Activated CD4-positive, alpha-beta T cell treated with anti-CD3 and anti-CD28 coated beads, Interleukin-2, amount 10 ng/mL, durations not matched to agents 7 days and 5 days (primary cell): ENCODE measurements at regions of chr20 and their contacts with region 1.

Region 1: DNA sequence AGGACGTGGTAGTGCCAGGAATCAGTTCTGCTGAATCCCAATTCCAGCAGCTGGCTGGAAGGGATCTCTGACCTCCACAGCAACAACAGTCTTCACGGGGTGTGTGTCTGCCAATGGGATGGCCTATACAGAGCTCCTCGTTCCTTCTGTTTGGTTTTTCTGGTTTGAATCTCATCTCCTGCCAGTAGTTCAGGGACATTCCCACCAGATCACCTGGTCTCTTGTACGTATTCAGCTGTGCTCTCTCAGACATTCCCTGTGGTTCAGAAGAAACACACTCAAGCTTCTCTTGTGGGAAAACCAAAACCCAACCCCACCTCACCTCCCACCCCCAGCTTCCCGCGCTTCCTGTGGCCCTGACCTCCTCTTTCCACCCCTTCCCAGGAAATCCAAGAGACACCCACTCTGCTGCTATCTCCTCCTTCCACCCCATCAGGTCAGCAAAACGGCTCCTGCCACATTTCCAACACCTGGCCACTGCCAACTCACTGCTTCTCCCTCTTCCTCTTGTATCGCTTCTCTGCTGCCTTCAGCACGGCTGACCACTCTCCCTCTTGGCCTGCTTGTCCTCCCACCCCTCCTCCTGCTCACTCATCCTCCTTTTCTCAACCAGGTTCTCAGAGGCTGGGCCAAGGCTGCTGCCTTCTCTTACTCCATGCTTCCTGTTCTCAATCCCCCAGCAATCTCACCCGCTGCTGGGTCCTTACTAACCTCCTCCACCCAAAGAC is 63.3 kb upstream of the PTGIS start:
- DNase-seq: no peak
- H3K4me3 Mint-ChIP-seq: no peak overlapping the region
- H3K27ac Mint-ChIP-seq: no peak overlapping the region
- H3K4me1 Mint-ChIP-seq: peaks cover 5% of the 10 kb centered on the region
- H3K27me3 Mint-ChIP-seq: no peaks in the 10 kb centered on the region

Region 2: GRCh38 chr20:49583669-49584417 is 47.4 kb before region 1 on chr20:
- CTCF ChIA-PET with region 1: no interaction called
- POLR2A ChIA-PET with region 1: no interaction called
- DNase-seq: no peak
- H3K4me3 Mint-ChIP-seq: no peak overlapping the region
- H3K27ac Mint-ChIP-seq: peak overlapping the region; percentile 60
- H3K4me1 Mint-ChIP-seq: peaks cover 24% of the 10 kb centered on the region
- H3K27me3 Mint-ChIP-seq: peaks cover 21% of the 10 kb centered on the region

Region 3: GRCh38 chr20:49641683-49642656 is 10.7 kb after region 1 on chr20:
- CTCF ChIA-PET with region 1: interaction called, 4 read pairs
- POLR2A ChIA-PET with region 1: interaction called, 11 read pairs
- DNase-seq: peak; percentile 47
- H3K4me3 Mint-ChIP-seq: no peak overlapping the region
- H3K27ac Mint-ChIP-seq: peak overlapping the region; percentile 83
- H3K4me1 Mint-ChIP-seq: peaks cover 23% of the 10 kb centered on the region
- H3K27me3 Mint-ChIP-seq: no peaks in the 10 kb centered on the region

Region 4: DNA sequence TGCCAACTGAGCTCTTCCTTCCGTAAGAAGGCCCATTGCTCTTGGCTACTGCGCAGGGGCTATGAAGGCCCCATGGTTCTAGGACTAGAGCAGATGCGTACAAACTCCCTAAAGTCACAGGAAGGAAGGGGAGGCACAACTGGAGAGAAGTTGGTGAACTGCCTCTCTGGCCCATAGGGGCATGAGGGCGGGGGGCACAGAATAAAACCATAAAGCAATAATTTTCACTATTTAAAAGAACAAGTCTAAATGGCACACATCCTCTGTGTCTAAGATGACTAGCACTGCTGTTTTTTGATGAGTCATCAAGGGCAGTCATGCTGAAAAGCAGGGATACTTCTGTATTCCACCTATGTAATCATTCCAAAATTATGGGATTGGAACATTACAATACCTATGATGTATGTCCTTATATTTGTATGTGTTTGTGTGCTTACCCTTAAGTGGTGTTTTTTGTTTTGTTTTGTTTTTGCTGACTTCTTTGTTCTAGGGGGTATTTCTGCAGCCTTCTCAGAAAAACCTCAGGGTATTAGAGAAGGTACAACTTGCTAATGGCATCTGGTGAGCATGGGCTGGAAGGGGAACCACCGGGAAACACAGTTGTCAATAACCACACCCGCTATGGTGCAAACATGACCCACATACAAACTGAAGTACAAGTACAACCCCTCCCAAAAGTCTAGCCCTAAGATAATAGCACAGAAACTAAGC is 45.5 kb after region 1 on chr20:
- CTCF ChIA-PET with region 1: no interaction called
- POLR2A ChIA-PET with region 1: no interaction called
- DNase-seq: peak; percentile 43
- H3K4me3 Mint-ChIP-seq: peak overlapping the region; percentile 10
- H3K27ac Mint-ChIP-seq: peak overlapping the region; percentile 69
- H3K4me1 Mint-ChIP-seq: peaks cover 64% of the 10 kb centered on the region
- H3K27me3 Mint-ChIP-seq: no peaks in the 10 kb centered on the region